Mammary epithelial cell (primary cell): ENCODE measurements at regions of chr12 and their contacts with region 1.

Region 1: GRCh38 chr12:9957834-9958233 is 13.4 kb upstream of the CLEC12A start:
- DNase-seq: no peak
- H3K4me3 ChIP-seq: no peak overlapping the region
- H3K27ac ChIP-seq: no peak overlapping the region
- H3K4me1 ChIP-seq: no peaks in the 10 kb centered on the region
- H3K27me3 ChIP-seq: peaks cover 5% of the 10 kb centered on the region
- CTCF ChIP-seq: no peak

Region 2: GRCh38 chr12:9387450-9387849 is 570.4 kb before region 1 on chr12:
- CTCF ChIA-PET with region 1: no interaction called
- dilution Hi-C with region 1: no loop called
- in situ Hi-C with region 1: no loop called
- intact Hi-C with region 1: loop called (anchors 5 kb)
- DNase-seq: no peak
- H3K4me3 ChIP-seq: no peak overlapping the region
- H3K27ac ChIP-seq: no peak overlapping the region
- H3K4me1 ChIP-seq: no peaks in the 10 kb centered on the region
- H3K27me3 ChIP-seq: no peaks in the 10 kb centered on the region
- CTCF ChIP-seq: no peak

Region 3: GRCh38 chr12:9869307-9870161 is 88.3 kb before region 1 on chr12 and contains the start of gene CLEC2B:
- CTCF ChIA-PET with region 1: no interaction called
- dilution Hi-C with region 1: no loop called
- in situ Hi-C with region 1: no loop called
- intact Hi-C with region 1: no loop called
- DNase-seq: peak; percentile 92
- H3K4me3 ChIP-seq: peak within 1 kb of the TSS; percentile 45 to 56 (median 53)
- H3K27ac ChIP-seq: peak within 1 kb of the TSS; percentile 70
- H3K4me1 ChIP-seq: peaks cover 26% of the 10 kb centered on the region
- H3K27me3 ChIP-seq: no peaks in the 10 kb centered on the region
- CTCF ChIP-seq: no peak
- total RNA-seq, gene CLEC2B: 0.17 to 0.42 TPM